ENCODE measurements at regions of chr5 and their contacts with region 1.

Region 1: DNA sequence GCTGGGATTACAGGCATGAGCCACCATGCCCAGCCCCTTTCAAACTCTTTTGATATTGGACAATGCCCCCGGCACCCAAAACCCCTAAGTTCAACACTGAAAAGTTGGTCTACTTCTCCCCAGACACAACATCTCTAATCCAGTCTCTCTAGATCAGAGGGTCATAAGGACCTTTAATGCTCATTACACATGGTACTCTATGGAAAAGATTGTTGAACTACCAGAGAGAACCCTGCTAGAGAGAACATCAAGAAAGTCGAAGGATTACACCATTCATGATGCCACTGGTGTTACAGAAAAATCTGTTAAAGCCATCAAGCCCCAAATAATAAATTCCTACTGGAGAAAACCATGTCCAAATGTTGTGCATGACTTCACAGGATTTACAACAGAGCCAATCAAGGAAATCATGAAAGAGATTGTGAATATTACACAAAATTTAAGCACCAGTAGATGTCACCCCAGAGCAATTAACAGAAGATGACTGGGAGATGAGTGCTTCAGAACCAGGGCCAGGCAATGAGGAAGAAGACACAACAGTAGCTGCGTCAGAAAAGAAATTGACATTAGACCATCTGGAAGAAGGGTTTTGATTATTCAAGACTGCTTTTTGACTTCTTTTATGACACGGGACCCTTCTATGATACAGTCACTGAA is 28.3 kb upstream of the NIPAL4 start:
- DNase-seq: peak in 1 of 3 donors; percentile 69
- ATAC-seq: peak; percentile 88
- H3K4me3 ChIP-seq: no peak overlapping the region
- H3K4me1 ChIP-seq: no peaks in the 10 kb centered on the region
- CTCF ChIP-seq: no peak

Region 2: GRCh38 chr5:157328277-157328912 is 103.3 kb before region 1 on chr5:
- intact Hi-C with region 1: no loop called
- DNase-seq: peak in 2 of 3 donors; percentile 51 to 59
- ATAC-seq: peak; percentile 97
- H3K4me3 ChIP-seq: no peak overlapping the region
- H3K4me1 ChIP-seq: no peaks in the 10 kb centered on the region
- CTCF ChIP-seq: peak; percentile 78

Region 3: DNA sequence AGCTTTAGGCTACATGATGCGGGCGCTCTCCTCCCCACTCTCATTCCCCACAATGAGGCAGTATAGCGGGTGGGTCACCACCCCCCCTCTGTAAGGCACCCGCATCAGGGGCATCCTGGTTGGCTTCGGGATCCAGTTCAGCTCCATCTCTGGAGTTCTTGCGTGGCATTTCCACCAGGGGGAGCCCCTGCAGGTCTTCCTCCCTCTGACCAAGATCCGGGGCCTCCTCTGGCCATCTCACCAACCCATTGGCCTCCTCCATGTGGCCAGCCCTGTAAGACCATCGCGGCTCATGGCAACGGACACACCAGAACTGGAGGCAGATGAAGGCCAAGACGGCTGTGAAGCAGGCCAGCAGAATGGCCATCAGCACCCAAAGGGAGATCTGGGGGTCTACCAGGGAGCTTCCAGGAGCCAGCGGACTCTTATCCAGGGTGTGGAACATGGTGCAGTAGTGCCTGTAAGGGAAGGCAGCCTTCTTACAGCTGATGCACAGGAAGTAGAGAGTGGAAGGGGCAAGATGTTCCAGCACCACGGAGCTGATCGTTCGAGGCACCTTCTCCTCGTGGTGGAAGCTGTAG is 88.8 kb before region 1 on chr5:
- intact Hi-C with region 1: no loop called
- DNase-seq: peak in 2 of 3 donors; percentile 46 to 54
- ATAC-seq: peak; percentile 53
- H3K4me3 ChIP-seq: no peak overlapping the region
- H3K4me1 ChIP-seq: no peaks in the 10 kb centered on the region
- CTCF ChIP-seq: no peak

Region 4: GRCh38 chr5:157471709-157472108 is 40.0 kb after region 1 on chr5:
- intact Hi-C with region 1: loop called in 1 of 2 experiments (anchors 5 kb)
- DNase-seq: peak in 1 of 3 donors; percentile 40
- ATAC-seq: peak; percentile 52
- H3K4me3 ChIP-seq: no peak overlapping the region
- H3K4me1 ChIP-seq: no peaks in the 10 kb centered on the region
- CTCF ChIP-seq: no peak

Measured in mucosa of descending colon (tissue), 3 donors.